Endothelial cell of umbilical vein (primary cell): ENCODE measurements at regions of chr15 and their contacts with region 1.

Region 1: GRCh38 chr15:44066316-44066740 is 128.7 kb downstream of the FRMD5 start:
- DNase-seq: peak; percentile 87
- H3K4me3 ChIP-seq: no peak overlapping the region
- H3K27ac ChIP-seq: peak overlapping the region; percentile 2
- H3K4me1 ChIP-seq: no peaks in the 10 kb centered on the region
- H3K27me3 ChIP-seq: no peaks in the 10 kb centered on the region
- CTCF ChIP-seq: peak; percentile 60 to 74
- POLR2A ChIP-seq: no peak

Region 2: GRCh38 chr15:43410572-43411214 is 655.6 kb before region 1 on chr15:
- CTCF ChIA-PET with region 1: no interaction called
- POLR2A ChIA-PET with region 1: no interaction called
- dilution Hi-C with region 1: no loop called
- intact Hi-C with region 1: no loop called
- DNase-seq: no peak
- H3K4me3 ChIP-seq: no peak overlapping the region
- H3K27ac ChIP-seq: no peak overlapping the region
- H3K4me1 ChIP-seq: no peaks in the 10 kb centered on the region
- H3K27me3 ChIP-seq: no peaks in the 10 kb centered on the region
- CTCF ChIP-seq: no peak
- POLR2A ChIP-seq: no peak

Region 3: GRCh38 chr15:43903864-43904290 is 162.5 kb before region 1 on chr15:
- CTCF ChIA-PET with region 1: interaction called, 48 read pairs
- POLR2A ChIA-PET with region 1: no interaction called
- dilution Hi-C with region 1: no loop called
- intact Hi-C with region 1: loop called (anchors 1 kb)
- DNase-seq: peak; percentile 71
- H3K4me3 ChIP-seq: no peak overlapping the region
- H3K27ac ChIP-seq: no peak overlapping the region
- H3K4me1 ChIP-seq: no peaks in the 10 kb centered on the region
- H3K27me3 ChIP-seq: no peaks in the 10 kb centered on the region
- CTCF ChIP-seq: peak; percentile 62 to 81
- POLR2A ChIP-seq: no peak

Region 4: DNA sequence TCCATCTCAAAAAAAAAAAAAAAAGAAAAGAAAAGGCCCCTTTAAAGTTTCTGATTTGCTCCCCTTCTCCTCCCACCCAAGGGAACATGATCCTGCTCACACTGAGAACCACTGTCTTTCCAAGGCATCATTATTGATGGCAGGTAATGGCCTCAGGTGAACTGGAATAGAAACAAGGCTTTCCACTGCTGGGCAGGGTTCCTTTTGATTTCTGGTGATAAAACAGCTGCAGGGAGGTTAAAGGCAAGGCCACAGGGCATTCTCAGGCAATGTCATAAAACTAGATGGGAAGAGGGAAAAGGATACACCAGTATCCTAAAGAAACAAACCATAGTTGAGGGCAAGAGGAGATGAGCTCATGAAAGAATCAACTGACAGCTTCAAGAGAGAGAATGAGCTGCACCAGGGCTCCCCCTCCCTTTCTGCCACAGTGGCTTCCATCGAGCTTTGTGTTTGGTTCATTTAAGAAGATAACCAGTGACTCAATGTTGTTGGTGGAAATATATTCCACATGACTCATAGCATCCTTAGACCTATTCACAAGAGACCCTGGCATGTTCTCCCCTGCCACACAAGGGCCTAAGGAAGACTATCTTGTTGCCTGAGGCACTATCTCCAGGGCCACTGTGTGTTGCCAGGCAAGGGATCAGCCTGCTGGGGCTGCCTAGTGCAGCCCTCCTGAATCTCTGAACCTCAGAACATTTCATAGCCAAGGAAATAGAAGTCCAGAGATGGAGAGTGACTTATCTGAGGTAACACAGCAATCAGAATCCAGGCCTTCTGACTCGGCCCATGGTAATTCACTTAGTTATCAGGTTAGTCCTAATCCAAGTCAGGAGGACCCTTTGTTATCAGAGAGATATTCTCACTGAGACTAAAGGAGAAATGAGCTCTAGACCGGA is 153.1 kb before region 1 on chr15:
- CTCF ChIA-PET with region 1: interaction called, 16 read pairs
- POLR2A ChIA-PET with region 1: no interaction called
- dilution Hi-C with region 1: no loop called
- intact Hi-C with region 1: no loop called
- DNase-seq: peak; percentile 98
- H3K4me3 ChIP-seq: no peak overlapping the region
- H3K27ac ChIP-seq: peak overlapping the region; percentile 89
- H3K4me1 ChIP-seq: peaks cover 38% of the 10 kb centered on the region
- H3K27me3 ChIP-seq: no peaks in the 10 kb centered on the region
- CTCF ChIP-seq: no peak
- POLR2A ChIP-seq: peak; percentile 46

Region 5: DNA sequence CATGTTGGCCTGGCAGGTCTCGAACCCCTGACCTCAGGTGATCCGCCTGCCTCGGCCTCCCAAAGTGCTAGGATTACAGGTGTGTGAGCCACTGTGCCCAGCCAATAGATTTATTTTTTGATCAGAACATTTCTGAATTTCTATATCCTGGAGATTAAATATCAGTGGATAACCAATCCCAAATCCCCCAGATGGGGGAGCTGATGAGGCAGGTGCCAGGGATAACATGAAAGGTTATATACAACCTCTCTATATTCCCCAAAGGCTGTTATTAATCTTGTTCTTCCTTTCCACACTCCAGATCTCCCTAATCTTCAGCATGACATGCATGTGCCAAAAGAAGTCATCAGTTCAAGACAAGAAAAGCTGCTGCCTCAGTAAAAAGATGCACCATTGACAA is 127.3 kb before region 1 on chr15:
- CTCF ChIA-PET with region 1: interaction called, 75 read pairs
- POLR2A ChIA-PET with region 1: no interaction called
- dilution Hi-C with region 1: no loop called
- intact Hi-C with region 1: loop called (anchors 1 kb)
- DNase-seq: peak; percentile 64
- H3K4me3 ChIP-seq: no peak overlapping the region
- H3K27ac ChIP-seq: no peak overlapping the region
- H3K4me1 ChIP-seq: no peaks in the 10 kb centered on the region
- H3K27me3 ChIP-seq: no peaks in the 10 kb centered on the region
- CTCF ChIP-seq: peak; percentile 47 to 57
- POLR2A ChIP-seq: no peak

Region 6: DNA sequence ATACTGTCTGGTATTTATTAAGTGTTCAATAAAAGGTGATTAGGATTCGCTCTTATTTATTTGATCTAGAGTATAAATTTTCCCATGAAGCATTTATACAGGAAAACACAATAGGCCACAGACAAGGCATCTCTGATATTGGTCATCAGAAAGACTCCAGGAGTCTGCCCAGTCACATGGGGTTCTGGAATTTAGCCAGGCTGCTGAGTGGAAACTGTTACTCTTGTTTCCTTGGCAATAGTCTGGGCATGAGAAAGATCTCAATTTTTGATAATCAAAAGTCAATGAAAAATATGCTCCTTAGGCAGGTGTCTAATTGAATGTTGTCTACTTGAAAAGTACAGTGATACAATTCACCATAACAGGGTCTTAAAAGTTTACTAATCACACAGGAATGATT is 32.4 kb before region 1 on chr15:
- CTCF ChIA-PET with region 1: interaction called, 8 read pairs
- POLR2A ChIA-PET with region 1: no interaction called
- dilution Hi-C with region 1: no loop called
- intact Hi-C with region 1: loop called (anchors 2 kb)
- DNase-seq: peak; percentile 94
- H3K4me3 ChIP-seq: no peak overlapping the region
- H3K27ac ChIP-seq: peak overlapping the region; percentile 52
- H3K4me1 ChIP-seq: peaks cover 42% of the 10 kb centered on the region
- H3K27me3 ChIP-seq: no peaks in the 10 kb centered on the region
- CTCF ChIP-seq: no peak
- POLR2A ChIP-seq: no peak

Region 7: GRCh38 chr15:44053458-44053857 is 12.9 kb before region 1 on chr15:
- CTCF ChIA-PET with region 1: interaction called, 29 read pairs
- POLR2A ChIA-PET with region 1: no interaction called
- dilution Hi-C with region 1: no loop called
- intact Hi-C with region 1: no loop called
- DNase-seq: no peak
- H3K4me3 ChIP-seq: no peak overlapping the region
- H3K27ac ChIP-seq: no peak overlapping the region
- H3K4me1 ChIP-seq: no peaks in the 10 kb centered on the region
- H3K27me3 ChIP-seq: no peaks in the 10 kb centered on the region
- CTCF ChIP-seq: no peak
- POLR2A ChIP-seq: no peak

Region 8: GRCh38 chr15:45429974-45430792 is 1363.9 kb after region 1 on chr15:
- CTCF ChIA-PET with region 1: no interaction called
- POLR2A ChIA-PET with region 1: no interaction called
- dilution Hi-C with region 1: no loop called
- intact Hi-C with region 1: no loop called
- DNase-seq: peak; percentile 50
- H3K4me3 ChIP-seq: peak overlapping the region in 2 of 3 experiments; percentile 32 to 55
- H3K27ac ChIP-seq: no peak overlapping the region
- H3K4me1 ChIP-seq: peaks cover 5% of the 10 kb centered on the region
- H3K27me3 ChIP-seq: peaks cover 2 to 14% of the 10 kb centered on the region in 2 experiments
- CTCF ChIP-seq: peak; percentile 100
- POLR2A ChIP-seq: no peak